Kidney (tissue), 22 donors: ENCODE measurements at regions of chr3 and their contacts with region 1.

Region 1: GRCh38 chr3:50192689-50193141 is 1.3 kb downstream of the GNAT1 start:
- DNase-seq: peak in 4 of 5 donors; percentile 87 to 91 (median 88)
- H3K4me3 ChIP-seq: no peak overlapping the region
- H3K27ac ChIP-seq: no peak overlapping the region
- H3K4me1 ChIP-seq: peaks cover 0 to 15% (median 0%) of the 10 kb centered on the region in 3 donors
- H3K27me3 ChIP-seq: peaks cover 14% of the 10 kb centered on the region
- CTCF ChIP-seq: peak; percentile 91

Region 2: GRCh38 chr3:50121416-50122032 is 71.2 kb before region 1 on chr3:
- intact Hi-C with region 1: loop called (anchors 5 kb)
- DNase-seq: peak; percentile 84 to 90 (median 87)
- H3K4me3 ChIP-seq: no peak overlapping the region
- H3K27ac ChIP-seq: no peak overlapping the region
- H3K4me1 ChIP-seq: peaks cover 5 to 16% (median 6%) of the 10 kb centered on the region in 3 donors
- H3K27me3 ChIP-seq: no peaks in the 10 kb centered on the region
- CTCF ChIP-seq: peak; percentile 87

Region 3: DNA sequence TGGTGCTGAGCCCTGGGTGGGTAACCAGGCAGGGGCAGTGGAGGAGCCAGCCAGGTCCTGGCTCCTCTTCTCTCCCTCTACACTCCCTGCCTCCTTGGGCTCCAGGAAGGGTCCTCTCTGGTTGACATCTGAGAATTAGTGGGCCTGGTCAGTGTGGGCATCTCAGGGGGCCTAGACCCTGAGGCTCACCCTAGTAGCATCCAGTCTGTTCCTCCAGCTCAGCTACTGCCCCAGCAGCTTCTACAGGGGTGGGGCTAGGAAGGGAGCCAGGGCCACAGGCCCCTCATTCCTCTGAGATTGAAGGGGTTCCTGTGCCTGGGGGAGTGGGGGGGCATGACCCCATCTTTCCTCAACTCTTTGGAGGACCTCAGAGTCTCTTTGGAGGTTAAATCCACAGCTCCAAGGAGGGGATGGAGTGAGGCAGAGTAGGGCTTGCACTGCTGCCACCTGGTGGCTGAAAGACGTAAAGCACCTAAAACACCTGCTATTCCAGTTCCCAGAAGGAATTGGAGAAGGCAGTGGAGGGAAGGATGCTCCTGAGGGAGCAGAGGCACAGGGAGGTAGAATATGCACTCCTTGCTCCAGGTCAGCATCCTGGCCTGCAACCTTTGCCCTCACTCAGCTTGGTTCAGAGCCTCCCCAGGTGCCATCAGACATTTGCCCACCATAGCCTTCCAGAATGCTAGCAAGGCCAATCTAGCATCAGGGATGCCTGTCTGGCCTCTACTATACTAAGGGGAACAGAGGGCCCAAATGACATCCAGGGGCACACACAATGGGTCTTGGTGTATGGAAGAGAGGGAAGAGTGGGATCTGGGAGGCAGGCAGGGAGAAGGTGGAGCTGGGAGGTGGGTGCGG is 349.7 kb after region 1 on chr3:
- intact Hi-C with region 1: no loop called
- DNase-seq: peak in 4 of 5 donors; percentile 81 to 86 (median 84)
- H3K4me3 ChIP-seq: no peak overlapping the region
- H3K27ac ChIP-seq: no peak overlapping the region
- H3K4me1 ChIP-seq: no peaks in the 10 kb centered on the region
- H3K27me3 ChIP-seq: no peaks in the 10 kb centered on the region
- CTCF ChIP-seq: peak; percentile 97